PC-9 (cell line): ENCODE measurements at regions of chr1 and their contacts with region 1.

Region 1: DNA sequence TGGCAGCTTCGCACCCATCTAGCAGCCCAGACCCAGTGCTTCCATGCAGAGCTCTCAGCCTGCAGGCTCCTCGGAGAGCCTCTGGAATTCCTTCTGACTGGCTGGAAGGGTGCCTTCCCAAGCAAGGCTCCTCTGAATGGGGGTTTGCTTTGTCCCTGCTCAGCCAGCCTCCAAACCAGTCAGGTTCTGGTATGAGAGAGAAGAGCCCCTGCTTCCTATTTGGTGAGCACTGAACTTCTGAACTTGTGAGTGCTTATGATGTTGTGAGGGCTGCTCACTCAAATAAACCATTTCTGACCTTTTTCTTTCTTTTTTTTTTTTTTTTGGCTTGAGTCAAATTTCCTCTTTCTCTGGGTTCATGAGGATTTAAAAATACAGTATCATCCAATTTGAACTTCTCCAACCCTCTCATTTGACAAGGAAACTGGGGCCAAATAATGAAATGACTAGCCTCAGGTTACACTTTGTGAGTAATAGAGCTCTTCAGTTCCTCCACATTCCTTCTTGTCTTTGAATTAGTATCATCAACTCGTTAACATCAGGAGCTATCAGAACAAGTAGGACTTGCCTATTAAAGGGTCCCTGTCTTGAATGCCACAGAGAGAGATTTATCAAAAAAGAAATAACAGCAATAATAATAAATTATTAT is 39.6 kb downstream of the GFI1 start:
- DNase-seq: peak in 1 of 2 experiments; percentile 70
- H3K4me3 ChIP-seq: no peak overlapping the region
- H3K27ac ChIP-seq: no peak overlapping the region
- H3K4me1 ChIP-seq: peaks cover 9% of the 10 kb centered on the region; the same call in 1 of the 2 replicates
- H3K27me3 ChIP-seq: no peaks in the 10 kb centered on the region
- CTCF ChIP-seq: no peak

Region 2: DNA sequence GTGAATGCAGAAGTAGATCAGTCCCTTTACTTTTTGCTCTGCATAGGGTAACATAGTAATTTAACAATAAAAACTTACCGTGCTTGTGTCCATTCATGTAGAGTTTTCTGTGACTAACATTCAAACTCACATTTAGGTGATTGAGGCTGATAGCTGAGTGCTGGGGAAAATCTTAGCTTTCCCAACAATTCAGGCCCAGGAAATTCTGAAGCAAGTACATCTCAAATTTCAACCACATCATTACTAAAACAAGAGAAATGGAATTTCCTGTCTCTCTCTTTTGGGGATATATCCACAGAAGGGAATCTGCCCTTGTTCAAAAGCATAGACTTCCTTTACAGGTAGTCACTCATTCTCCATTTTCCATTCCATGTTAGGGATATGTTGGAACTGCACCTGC is 262.5 kb before region 1 on chr1:
- CTCF ChIA-PET with region 1: no interaction called
- POLR2A ChIA-PET with region 1: interaction called, 13 read pairs
- intact Hi-C with region 1: no loop called
- DNase-seq: peak in 1 of 2 experiments; percentile 4
- H3K4me3 ChIP-seq: no peak overlapping the region
- H3K27ac ChIP-seq: no peak overlapping the region
- H3K4me1 ChIP-seq: 0 out of 2 replicates have a peak, but pooled peaks cover 7% of the 10 kb centered on the region
- H3K27me3 ChIP-seq: no peaks in the 10 kb centered on the region
- CTCF ChIP-seq: no peak

Region 3: GRCh38 chr1:92367496-92367895 is 79.7 kb before region 1 on chr1:
- CTCF ChIA-PET with region 1: no interaction called
- POLR2A ChIA-PET with region 1: no interaction called
- intact Hi-C with region 1: no loop called
- DNase-seq: no peak
- H3K4me3 ChIP-seq: no peak overlapping the region
- H3K27ac ChIP-seq: no peak overlapping the region
- H3K4me1 ChIP-seq: no peaks in the 10 kb centered on the region
- H3K27me3 ChIP-seq: no peaks in the 10 kb centered on the region
- CTCF ChIP-seq: no peak

Region 4: DNA sequence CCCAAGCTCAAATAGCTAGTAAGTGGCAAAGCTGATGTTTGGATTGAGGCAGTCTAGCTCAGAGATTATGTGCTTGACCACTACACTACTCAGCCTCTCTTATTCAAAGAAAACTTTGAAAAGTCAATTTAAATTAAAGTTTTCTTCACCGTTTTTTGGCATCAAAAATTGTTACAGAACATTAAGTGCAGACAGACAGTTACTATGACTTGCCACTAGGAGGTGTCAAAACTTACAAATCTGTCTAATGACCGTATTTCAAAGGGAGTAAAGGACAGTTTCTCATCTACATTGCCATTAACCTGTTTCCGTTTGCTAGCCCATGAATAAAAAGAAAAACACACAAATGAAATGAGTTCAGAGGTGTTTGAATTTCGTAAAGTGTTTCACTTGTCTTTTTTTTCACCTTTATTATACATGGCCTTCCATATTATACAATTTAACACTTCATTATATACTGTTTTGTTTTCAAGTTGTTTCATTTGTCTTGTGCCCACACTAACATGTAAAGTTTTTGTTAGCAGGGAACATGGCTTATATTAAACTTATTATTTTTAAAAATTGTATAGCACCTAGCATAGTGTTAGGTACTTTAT is 574.5 kb after region 1 on chr1:
- CTCF ChIA-PET with region 1: no interaction called
- POLR2A ChIA-PET with region 1: no interaction called
- intact Hi-C with region 1: no loop called
- DNase-seq: peak in 1 of 2 experiments; percentile 56
- H3K4me3 ChIP-seq: no peak overlapping the region
- H3K27ac ChIP-seq: no peak overlapping the region
- H3K4me1 ChIP-seq: peaks cover 13% of the 10 kb centered on the region
- H3K27me3 ChIP-seq: no peaks in the 10 kb centered on the region
- CTCF ChIP-seq: peak; percentile 97